OCI-LY7 (cell line): ENCODE measurements at regions of chr14 and their contacts with region 1.

Region 1: GRCh38 chr14:105537369-105538164 is 11.2 kb downstream of the TMEM121 start:
- DNase-seq: peak; percentile 66
- H3K4me3 ChIP-seq: no peak overlapping the region
- H3K27ac ChIP-seq: no peak overlapping the region
- H3K4me1 ChIP-seq: peaks cover 4% of the 10 kb centered on the region
- CTCF ChIP-seq: peak; percentile 86

Region 2: DNA sequence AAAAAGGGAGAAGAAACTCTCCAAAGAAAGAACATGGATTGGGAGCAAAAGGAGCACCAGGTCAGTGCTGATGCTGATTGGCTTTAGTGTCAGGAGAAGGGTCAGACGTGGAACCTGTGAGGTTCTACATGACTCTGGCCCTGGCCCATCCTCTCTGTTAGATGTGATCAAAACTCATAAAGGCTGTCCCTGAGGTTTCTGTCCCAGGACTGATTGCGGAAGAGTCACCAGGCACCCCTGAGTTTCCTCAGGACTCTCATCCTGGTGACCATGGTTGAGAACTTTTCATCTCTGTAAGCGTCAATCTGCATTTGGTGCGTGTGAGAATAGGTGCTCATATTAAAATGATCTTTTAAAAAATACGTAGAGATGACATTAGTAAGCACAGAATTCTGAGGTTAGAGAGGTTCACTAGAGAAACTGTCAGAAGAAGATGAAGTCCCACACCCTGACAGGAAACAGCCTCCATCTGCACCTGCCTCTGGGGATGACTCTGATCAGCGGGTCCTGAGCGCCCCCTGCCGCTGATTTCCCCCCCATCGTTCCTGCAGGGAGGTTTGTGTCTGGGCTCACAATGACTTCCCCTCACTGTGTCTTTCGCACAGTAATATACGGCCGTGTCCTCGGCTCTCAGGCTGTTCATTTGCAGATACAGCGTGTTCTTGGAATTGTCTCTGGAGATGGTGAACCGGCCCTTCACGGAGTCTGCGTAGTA is 730.6 kb after region 1 on chr14:
- CTCF ChIA-PET with region 1: no interaction called
- POLR2A ChIA-PET with region 1: no interaction called
- intact Hi-C with region 1: loop called (anchors 5 kb)
- DNase-seq: peak; percentile 88
- H3K4me3 ChIP-seq: peak overlapping the region; percentile 27
- H3K27ac ChIP-seq: no peak overlapping the region
- H3K4me1 ChIP-seq: peaks cover 20% of the 10 kb centered on the region
- CTCF ChIP-seq: peak; percentile 91